ENCODE measurements at regions of chr12 and their contacts with region 1.

Region 1: DNA sequence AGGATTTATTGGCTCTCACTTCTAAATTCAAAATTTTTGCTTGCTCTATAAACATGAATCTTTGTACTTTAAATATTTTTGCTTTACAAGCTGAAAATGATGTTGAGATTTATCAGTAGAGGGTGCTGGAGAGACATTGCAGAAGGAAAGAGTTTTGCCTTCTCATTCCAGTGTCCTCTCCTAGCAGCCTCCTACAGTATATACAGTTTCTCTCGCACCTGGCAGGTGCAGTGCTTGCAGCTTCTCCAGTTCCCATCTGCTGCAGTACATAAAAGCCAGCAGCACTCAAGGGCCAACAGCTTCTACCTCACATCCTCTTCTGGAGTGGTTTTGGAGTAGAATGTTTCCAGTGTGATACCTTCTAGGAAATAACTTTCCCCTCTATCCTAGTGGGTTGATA is 601.8 kb upstream of the ATXN7L3B start:
- DNase-seq: no peak
- H3K4me3 ChIP-seq: no peak overlapping the region
- H3K27ac ChIP-seq: no peak overlapping the region
- H3K4me1 ChIP-seq: no peaks in the 10 kb centered on the region
- H3K27me3 ChIP-seq: no peaks in the 10 kb centered on the region
- CTCF ChIP-seq: peak; percentile 65

Region 2: DNA sequence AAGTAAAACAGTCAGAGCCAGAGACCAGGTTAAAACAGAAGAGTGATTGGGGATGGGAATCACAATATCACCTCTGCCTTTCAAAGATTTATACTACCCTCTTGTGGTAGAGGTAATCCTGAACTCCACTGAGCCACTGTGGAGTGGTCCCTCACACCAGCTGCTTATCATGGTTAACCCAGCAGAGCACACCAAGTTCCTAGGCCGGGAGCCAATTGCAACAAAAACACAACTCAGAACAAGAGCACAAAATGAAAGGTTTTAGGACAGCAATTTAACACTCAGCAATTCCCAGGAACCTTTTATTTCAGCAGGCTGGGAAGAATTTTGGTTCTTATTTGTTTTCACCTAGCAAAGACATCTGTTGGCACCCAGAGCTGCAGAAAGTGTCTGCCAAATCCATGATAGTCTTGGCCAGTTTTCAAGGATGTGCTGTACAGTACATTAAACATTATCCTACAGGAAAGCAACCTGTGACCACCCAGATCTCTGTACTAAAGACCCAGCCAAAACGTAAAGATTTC is 381.3 kb after region 1 on chr12:
- CTCF ChIA-PET with region 1: interaction called, 3 read pairs
- POLR2A ChIA-PET with region 1: no interaction called
- intact Hi-C with region 1: loop called (anchors 1 kb)
- DNase-seq: peak in 1 of 2 experiments; percentile 15
- H3K4me3 ChIP-seq: no peak overlapping the region
- H3K27ac ChIP-seq: no peak overlapping the region
- H3K4me1 ChIP-seq: peaks cover 6% of the 10 kb centered on the region; the same call in 1 of the 2 replicates
- H3K27me3 ChIP-seq: no peaks in the 10 kb centered on the region
- CTCF ChIP-seq: peak; percentile 67

Region 3: DNA sequence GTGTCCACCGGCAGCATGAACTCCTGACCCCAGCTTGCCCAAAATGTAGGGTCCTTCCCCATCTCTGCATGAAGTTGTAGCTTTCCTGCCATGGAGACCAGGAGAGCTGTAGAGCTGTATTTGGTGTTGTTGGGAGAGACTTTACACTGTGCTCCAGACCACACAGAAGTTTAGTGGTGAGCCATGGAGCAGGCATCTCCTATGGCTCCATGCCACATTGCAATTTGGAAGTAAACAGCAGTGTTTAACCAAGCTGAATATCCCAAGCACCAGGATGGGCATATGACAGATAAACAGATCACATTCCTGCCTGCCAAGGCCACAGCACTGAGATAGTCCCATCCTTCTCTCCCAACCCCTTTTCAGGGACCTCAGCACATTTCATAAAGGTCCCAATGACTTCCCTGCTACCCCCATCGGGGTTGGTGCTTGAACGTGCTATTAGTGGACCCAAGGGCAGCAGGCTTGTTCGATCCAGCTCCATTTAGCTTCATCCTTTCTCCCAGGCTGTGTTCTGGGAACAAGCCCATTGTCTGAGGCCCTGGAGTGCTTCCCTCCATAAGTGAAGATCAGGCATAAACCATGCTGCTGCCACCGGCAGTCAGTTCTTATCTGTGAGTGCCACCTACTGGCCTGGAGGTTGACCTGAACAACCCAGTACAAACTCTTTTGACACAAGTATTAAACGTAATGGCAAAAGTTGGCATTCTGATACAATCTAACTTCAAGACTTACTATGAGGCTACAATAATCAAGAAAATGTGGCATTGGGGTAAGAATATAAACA is 429.6 kb after region 1 on chr12:
- CTCF ChIA-PET with region 1: no interaction called
- POLR2A ChIA-PET with region 1: no interaction called
- intact Hi-C with region 1: loop called (anchors 2 kb)
- DNase-seq: peak in 1 of 2 experiments; percentile 15
- H3K4me3 ChIP-seq: no peak overlapping the region
- H3K27ac ChIP-seq: no peak overlapping the region
- H3K4me1 ChIP-seq: no peaks in the 10 kb centered on the region
- H3K27me3 ChIP-seq: no peaks in the 10 kb centered on the region
- CTCF ChIP-seq: peak; percentile 68

Region 4: GRCh38 chr12:74415633-74416032 is 479.8 kb after region 1 on chr12:
- CTCF ChIA-PET with region 1: no interaction called
- POLR2A ChIA-PET with region 1: no interaction called
- intact Hi-C with region 1: loop called (anchors 5 kb)
- DNase-seq: no peak
- H3K4me3 ChIP-seq: no peak overlapping the region
- H3K27ac ChIP-seq: no peak overlapping the region
- H3K4me1 ChIP-seq: no peaks in the 10 kb centered on the region
- H3K27me3 ChIP-seq: no peaks in the 10 kb centered on the region
- CTCF ChIP-seq: peak; percentile 62

Region 5: DNA sequence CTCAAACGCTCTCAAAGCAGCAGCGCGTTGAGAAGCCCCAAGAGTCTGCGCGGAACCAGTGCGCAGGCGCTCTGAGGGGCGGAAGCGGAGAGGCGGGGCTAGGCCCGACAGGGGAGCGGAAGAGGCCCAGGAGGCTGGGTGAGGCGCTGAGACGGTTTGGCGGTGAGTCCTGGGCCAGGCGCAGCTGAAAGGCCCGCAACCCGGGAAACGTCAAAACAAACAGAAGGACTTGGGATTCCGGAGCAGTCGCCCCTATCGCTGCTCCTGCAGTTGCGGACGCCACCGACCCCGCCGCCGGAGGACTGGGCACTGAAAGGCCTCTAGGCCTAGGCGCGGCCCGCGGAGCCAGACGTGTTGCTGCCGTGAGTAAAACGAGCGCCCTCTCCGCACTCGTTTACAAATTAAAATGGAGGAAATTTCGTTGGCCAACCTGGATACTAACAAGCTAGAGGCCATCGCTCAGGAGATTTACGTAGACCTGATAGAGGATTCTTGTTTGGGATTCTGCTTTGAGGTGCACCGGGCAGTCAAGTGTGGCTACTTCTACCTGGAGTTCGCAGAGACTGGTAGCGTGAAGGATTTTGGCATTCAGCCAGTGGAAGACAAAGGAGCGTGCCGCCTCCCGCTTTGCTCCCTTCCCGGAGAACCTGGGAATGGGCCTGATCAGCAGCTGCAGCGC is 602.0 kb after region 1 on chr12 and contains the start of gene ATXN7L3B:
- CTCF ChIA-PET with region 1: no interaction called
- POLR2A ChIA-PET with region 1: no interaction called
- intact Hi-C with region 1: loop called (anchors 10 kb)
- DNase-seq: peak; percentile 88 to 92
- H3K4me3 ChIP-seq: peak within 1 kb of the TSS; percentile 87
- H3K27ac ChIP-seq: peak within 1 kb of the TSS; percentile 80
- H3K4me1 ChIP-seq: peaks cover 23% of the 10 kb centered on the region
- H3K27me3 ChIP-seq: no peaks in the 10 kb centered on the region
- CTCF ChIP-seq: no peak
- total RNA-seq, gene ATXN7L3B: 25.3 and 31.6 TPM in 2 replicates